ENCODE measurements at regions of chr19 and their contacts with region 1.

Region 1: GRCh38 chr19:49224856-49225255 is 67.3 kb downstream of the TRPM4 start:
- DNase-seq: peak; percentile 84 to 90
- ATAC-seq: peak; percentile 79 to 89
- H3K4me3 ChIP-seq: no peak overlapping the region
- H3K27ac ChIP-seq: peak overlapping the region in 1 of 2 experiments; percentile 23; a peak in 1 of 6 replicates
- H3K4me1 ChIP-seq: no peaks in the 10 kb centered on the region
- CTCF ChIP-seq: peak; percentile 67
- EP300 ChIP-seq: no peak
- POLR2A ChIP-seq: no peak
- RAD21 ChIP-seq: peak; percentile 78 to 94

Region 2: GRCh38 chr19:49073514-49074378 is 151.1 kb before region 1 on chr19:
- CTCF ChIA-PET with region 1: interaction called, 31 read pairs
- POLR2A ChIA-PET with region 1: no interaction called
- DNase-seq: peak; percentile 65 to 73
- ATAC-seq: peak; percentile 77 to 86
- H3K4me3 ChIP-seq: peak overlapping the region; percentile 6; the same call in 1 of the 3 replicates
- H3K27ac ChIP-seq: 0 out of 6 replicates have a peak overlapping the region, but pooled peaks of 1 of the 2 experiments have one; percentile 9
- H3K4me1 ChIP-seq: peaks cover 16% of the 10 kb centered on the region
- CTCF ChIP-seq: peak; percentile 62
- EP300 ChIP-seq: no peak
- POLR2A ChIP-seq: no peak
- RAD21 ChIP-seq: peak; percentile 40 to 66; a peak in 4 of 5 replicates

Region 3: DNA sequence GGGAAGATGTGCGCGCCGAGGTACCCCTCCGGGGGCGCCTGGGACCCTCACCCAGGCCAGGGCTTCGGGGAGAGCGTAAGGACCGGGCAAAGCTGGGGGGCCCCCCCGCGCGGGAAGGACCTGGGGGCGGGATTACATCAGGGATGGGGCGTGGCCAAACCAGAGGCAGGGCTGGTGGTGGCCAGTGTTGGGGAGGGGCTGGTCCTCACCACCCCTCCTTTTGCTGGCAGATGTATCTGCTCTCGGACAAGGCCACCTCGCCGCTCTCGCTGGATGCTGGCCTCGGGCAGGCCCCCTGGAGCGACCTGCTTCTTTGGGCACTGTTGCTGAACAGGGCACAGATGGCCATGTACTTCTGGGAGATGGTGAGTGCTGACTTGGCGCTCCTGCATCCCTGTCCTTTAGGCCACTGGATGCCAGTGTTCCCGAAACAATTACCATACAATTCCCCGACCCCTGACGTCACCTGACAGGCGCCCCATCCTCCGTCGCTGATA is 42.0 kb before region 1 on chr19:
- CTCF ChIA-PET with region 1: interaction called, 10 read pairs
- POLR2A ChIA-PET with region 1: no interaction called
- DNase-seq: no peak
- ATAC-seq: no peak
- H3K4me3 ChIP-seq: no peak overlapping the region
- H3K27ac ChIP-seq: no peak overlapping the region
- H3K4me1 ChIP-seq: no peaks in the 10 kb centered on the region
- CTCF ChIP-seq: no peak
- EP300 ChIP-seq: no peak
- POLR2A ChIP-seq: no peak
- RAD21 ChIP-seq: no peak

Region 4: DNA sequence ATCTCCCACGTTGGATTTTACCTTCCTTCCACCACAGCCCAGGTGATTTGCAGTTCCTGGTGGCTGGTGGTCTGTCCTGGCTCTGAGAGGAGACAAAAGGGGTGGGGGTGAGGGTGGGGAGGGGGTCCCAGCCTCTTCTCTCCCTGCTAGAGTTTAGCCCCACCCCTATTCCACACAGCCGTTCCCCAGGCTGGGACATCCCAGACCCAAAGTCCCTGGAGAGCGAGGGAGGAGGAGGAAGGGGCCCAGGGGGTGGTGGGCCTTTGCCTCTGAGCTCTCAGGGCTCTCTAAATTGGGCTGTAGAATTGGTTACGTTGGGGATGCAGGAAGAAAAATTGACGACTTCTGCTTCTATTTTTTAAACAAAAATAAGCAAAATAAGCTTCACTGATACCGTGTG is 18.3 kb after region 1 on chr19:
- CTCF ChIA-PET with region 1: interaction called, 56 read pairs
- POLR2A ChIA-PET with region 1: no interaction called
- DNase-seq: no peak
- ATAC-seq: no peak
- H3K4me3 ChIP-seq: no peak overlapping the region
- H3K27ac ChIP-seq: no peak overlapping the region
- H3K4me1 ChIP-seq: no peaks in the 10 kb centered on the region
- CTCF ChIP-seq: no peak
- EP300 ChIP-seq: no peak
- POLR2A ChIP-seq: no peak
- RAD21 ChIP-seq: no peak

Region 5: GRCh38 chr19:49301165-49301865 is 76.5 kb after region 1 on chr19:
- CTCF ChIA-PET with region 1: interaction called, 50 read pairs
- POLR2A ChIA-PET with region 1: no interaction called
- DNase-seq: peak; percentile 78 to 91
- ATAC-seq: peak; percentile 99 to 100
- H3K4me3 ChIP-seq: peak overlapping the region; percentile 29; the same call in 1 of the 3 replicates
- H3K27ac ChIP-seq: no peak overlapping the region
- H3K4me1 ChIP-seq: no peaks in the 10 kb centered on the region
- CTCF ChIP-seq: peak; percentile 92
- EP300 ChIP-seq: no peak
- POLR2A ChIP-seq: no peak
- RAD21 ChIP-seq: peak; percentile 41 to 57; a peak in 4 of 5 replicates

Region 6: DNA sequence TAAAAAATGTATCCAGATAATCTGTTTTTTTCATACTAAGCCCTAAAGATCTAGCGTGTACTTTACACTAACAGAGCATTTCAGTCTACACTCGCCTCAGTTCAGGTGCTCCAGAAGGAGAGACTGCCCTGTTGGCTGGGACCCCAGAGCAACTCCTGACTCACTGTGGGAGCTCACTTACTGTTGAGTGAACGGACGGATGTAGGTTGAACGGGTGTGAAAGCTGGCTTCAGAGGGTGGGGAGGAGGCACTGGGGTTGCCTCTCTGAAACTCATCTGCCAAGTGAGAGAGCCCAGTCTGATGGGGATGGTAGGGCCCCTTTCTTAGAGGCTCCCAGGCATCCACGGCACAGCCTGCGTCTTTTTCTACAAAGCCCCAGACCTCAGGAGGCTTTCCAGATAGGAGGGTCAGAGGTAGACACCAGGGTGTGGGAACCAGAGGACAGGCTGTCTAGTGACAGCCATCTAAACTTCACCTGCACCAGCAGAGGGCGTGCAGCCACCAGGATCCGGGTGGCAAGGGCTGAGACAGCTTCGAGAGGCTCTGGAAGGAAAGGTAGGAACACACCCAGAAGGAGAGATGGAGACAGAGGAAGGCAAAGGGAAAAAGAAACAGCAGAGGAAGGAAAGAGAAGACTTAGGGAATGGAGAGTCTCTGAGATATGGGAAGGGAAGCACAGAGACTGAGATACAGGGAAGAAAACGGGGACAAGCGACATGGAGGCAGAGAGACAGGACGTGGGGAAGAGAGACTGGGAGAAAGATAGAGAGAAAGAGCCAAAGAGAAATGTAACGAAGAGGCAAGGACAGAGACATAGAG is 166.9 kb after region 1 on chr19:
- CTCF ChIA-PET with region 1: interaction called, 17 read pairs
- POLR2A ChIA-PET with region 1: no interaction called
- DNase-seq: peak; percentile 89 to 93
- ATAC-seq: peak; percentile 83 to 94
- H3K4me3 ChIP-seq: no peak overlapping the region
- H3K27ac ChIP-seq: no peak overlapping the region
- H3K4me1 ChIP-seq: 0 out of 3 replicates have a peak, but pooled peaks cover 3% of the 10 kb centered on the region
- CTCF ChIP-seq: peak; percentile 98
- EP300 ChIP-seq: no peak
- POLR2A ChIP-seq: no peak
- RAD21 ChIP-seq: peak; percentile 97 to 99

Region 7: GRCh38 chr19:49451430-49452181 is 226.8 kb after region 1 on chr19 and contains the start of gene PIH1D1:
- CTCF ChIA-PET with region 1: interaction called, 38 read pairs
- POLR2A ChIA-PET with region 1: no interaction called
- DNase-seq: peak; percentile 99 to 100
- ATAC-seq: peak; percentile 76 to 79
- H3K4me3 ChIP-seq: peak within 1 kb of the TSS; percentile 90
- H3K27ac ChIP-seq: peak within 1 kb of the TSS; percentile 93 to 99
- H3K4me1 ChIP-seq: peaks cover 25% of the 10 kb centered on the region
- CTCF ChIP-seq: no peak
- EP300 ChIP-seq: no peak
- POLR2A ChIP-seq: peak; percentile 85
- RAD21 ChIP-seq: no peak
- polyA plus RNA-seq, gene PIH1D1: 74.1 and 89.7 TPM in 2 replicates

Measured in A549 (cell line).